Aorta (tissue), 5 donors: ENCODE measurements at regions of chr5 and their contacts with region 1.

Region 1: DNA sequence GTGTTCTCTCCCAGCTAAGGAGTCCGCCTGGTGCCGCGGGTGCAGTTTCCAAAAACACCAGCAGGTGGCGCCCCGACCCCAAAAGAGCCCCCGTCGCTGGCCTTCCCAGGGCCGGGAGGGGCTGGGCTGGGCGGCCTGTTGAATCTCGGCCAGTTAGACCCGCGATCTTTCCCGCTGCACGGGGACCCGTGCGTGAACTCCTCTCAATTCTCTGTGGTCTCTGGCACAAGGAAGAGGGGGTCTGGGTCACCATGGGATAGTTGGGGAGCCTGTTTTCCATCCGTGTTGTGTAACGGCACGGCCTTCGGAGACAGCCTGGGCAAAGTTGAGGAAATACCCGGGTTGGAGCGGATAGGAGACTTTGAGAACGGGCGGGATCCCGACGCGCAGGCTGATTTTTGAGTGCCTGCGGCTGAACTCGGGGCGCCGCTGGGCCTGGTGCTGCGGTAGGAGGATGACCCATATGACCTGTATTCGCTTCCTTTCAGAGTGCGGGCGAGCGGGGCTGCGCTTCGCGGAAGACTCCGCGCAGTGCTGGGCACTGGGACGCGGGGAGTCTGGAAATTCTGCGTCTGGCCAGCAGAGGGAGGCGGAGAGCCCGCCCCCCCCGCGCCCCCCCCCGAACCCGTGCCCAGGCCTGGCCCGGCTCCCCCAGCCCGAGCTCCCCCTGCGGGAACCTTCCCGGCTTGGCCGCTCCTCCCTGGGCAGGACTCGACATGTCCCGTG is 7.9 kb upstream of the PSD2 start:
- DNase-seq: peak; percentile 89 to 97
- ATAC-seq: peak; percentile 95
- H3K4me3 ChIP-seq: peak overlapping the region; percentile 5 to 59
- H3K27ac ChIP-seq: peak overlapping the region; percentile 18 to 62
- H3K4me1 ChIP-seq: no peaks in the 10 kb centered on the region
- H3K27me3 ChIP-seq: no peaks in the 10 kb centered on the region

Region 2: DNA sequence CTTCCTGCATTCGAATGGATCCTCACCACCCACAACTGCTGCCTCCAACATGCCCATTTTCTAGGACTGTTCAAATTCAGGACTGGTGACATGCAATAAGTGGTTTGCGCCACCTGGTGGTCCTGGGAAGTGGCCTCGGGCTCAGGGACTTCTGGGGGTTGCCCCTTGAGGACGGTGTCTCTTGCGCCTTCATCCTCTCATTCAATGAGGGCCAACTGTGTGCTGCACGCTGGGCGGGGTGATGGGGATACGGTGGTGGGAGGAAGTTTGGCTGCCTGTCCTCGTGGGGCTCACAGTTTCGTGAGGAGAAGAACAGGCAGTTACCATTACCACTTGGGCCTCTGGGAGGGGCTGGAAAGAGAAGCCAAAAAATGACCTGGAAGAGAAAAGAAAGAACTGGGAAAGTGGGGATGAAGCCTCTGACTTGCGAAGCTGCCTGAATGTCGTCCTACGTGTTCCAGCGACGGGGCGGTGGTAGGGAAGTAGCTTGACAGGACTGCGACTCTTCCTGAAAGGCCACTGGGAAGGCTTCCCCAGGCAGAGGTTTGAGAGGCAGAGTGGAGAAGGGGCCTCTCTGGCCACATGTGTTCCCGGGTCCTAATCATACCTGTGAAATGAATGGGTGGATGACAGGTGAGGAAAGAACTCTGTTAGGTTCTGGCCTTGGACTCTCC is 56.9 kb after region 1 on chr5:
- intact Hi-C with region 1: loop called (anchors 2 to 5 kb)
- DNase-seq: peak; percentile 86 to 92
- ATAC-seq: no peak
- H3K4me3 ChIP-seq: no peak overlapping the region
- H3K27ac ChIP-seq: no peak overlapping the region
- H3K4me1 ChIP-seq: no peaks in the 10 kb centered on the region
- H3K27me3 ChIP-seq: no peaks in the 10 kb centered on the region

Region 3: DNA sequence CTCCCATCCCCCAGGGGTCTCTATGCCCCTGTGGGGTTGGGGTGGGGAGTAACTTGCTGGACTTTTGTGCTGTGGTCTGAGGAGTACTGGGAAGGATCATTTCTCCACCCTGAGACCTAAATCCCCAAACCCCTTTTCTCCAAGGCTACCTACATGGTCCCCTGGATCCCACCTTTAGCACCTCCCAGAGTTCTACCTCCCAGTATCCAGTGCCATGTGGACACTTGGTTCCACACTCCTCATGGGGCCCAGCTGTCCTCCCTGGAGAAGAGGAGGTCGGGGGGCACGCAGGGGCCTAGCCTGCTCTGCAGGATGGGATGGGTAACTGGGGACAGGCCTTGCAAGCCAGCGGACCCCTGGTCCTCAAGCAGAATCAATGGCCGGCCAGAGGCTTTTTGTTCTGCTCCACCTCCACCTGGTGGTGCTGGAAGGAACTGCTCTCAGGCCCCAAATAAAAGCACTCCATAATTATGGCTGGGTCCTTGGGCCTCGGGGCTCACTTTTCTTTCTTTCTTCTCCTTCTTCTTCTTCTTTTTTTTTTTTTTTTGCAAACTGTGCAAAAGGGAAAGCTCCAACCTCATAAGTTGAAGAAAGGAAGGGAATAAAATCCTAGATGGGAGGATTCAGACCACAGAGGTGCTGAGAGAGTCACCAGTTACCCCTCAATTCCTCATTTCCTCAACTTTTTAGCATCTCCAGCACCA is 76.3 kb after region 1 on chr5:
- intact Hi-C with region 1: loop called (anchors 1 to 2 kb)
- DNase-seq: peak; percentile 69 to 87
- ATAC-seq: peak; percentile 69
- H3K4me3 ChIP-seq: no peak overlapping the region
- H3K27ac ChIP-seq: no peak overlapping the region
- H3K4me1 ChIP-seq: no peaks in the 10 kb centered on the region
- H3K27me3 ChIP-seq: no peaks in the 10 kb centered on the region

Region 4: DNA sequence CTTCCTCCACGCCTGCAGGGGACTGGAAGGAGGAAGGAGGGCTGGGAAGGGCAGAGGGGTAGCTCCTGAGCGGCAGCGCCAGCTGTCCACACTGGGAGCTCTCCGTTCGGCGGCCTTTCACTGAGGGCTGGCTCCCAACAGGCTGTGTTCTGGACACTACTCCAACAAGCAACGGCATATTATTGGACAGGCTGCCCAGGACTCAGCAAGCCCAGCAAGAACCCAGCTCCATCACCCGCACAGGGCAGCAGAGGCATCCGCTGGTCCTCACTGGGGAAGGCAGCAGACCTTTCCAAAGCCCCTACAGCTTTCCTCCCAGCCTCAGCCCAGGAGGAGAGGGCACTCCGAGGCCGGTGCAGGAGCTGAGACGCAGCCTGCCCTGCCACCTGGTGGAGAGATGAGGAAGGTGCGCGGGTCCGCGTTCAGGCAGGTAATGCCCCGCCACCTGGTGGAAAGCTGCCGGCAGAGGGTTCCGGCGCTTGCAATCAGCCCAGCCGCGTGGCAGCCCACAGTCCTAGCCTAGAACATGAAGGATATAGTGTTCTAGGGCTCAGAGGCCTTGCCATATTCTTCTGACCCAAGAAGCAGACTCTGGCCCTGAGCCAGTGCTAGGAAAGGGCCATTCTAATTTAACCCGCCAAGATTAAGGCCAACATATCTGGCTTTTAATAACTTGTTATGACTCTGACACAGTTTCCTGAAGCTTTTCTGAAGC is 181.0 kb after region 1 on chr5:
- intact Hi-C with region 1: loop called (anchors 1 to 2 kb)
- DNase-seq: peak; percentile 82 to 95
- ATAC-seq: peak; percentile 93
- H3K4me3 ChIP-seq: no peak overlapping the region
- H3K27ac ChIP-seq: no peak overlapping the region
- H3K4me1 ChIP-seq: peaks cover 0 to 1% of the 10 kb centered on the region in 2 donors
- H3K27me3 ChIP-seq: no peaks in the 10 kb centered on the region

Region 5: GRCh38 chr5:140157032-140157803 is 369.5 kb after region 1 on chr5:
- intact Hi-C with region 1: loop called in 1 of 2 experiments (anchors 5 kb)
- DNase-seq: peak; percentile 91 to 96
- ATAC-seq: peak; percentile 95
- H3K4me3 ChIP-seq: no peak overlapping the region
- H3K27ac ChIP-seq: no peak overlapping the region
- H3K4me1 ChIP-seq: no peaks in the 10 kb centered on the region
- H3K27me3 ChIP-seq: no peaks in the 10 kb centered on the region